Lower leg skin (tissue), 4 donors: ENCODE measurements at regions of chr1 and their contacts with region 1.

Region 1: DNA sequence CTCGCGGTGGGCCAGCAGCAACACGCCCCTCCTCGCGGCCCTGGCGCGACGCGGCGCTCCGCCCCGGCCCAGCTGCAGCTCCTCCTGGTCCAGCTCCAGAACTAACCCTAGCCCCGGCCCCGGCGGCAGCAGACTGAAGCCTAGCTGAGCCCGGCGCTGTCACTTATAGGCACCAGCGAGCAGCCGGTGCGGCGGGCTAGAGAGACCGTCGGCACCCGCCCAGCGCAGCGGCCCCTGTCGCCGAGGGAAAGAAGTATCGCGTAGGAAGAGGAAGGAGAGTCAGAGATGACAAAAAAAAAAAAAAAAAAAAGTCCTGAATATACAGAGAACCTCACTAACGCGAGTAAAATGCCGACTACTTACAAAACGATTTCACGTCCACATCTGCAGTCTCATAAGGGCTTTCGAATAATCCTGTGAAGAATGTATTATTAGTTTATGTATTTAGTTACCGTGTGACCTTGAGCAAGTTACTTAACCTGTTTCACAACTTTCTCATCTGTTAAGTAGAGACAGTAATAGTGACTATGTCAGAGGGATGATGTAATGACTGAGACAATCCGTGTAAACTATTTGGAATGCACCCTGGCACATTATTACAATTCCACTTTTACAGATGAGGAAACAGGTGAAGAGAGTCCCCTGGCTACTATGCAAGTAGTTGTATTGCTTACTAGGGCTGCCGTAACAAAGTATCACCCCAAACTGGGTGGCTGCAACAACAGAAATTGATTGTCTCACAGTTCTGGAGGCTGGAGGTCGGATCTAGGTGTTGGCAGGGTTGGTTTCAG is at the start of gene SLC9A1:
- DNase-seq: peak; percentile 93 to 99
- H3K4me3 ChIP-seq: peak within 1 kb of the TSS; percentile 58
- CTCF ChIP-seq: no peak
- POLR2A ChIP-seq: peak in 1 of 2 donors; percentile 97
- total RNA-seq, gene SLC9A1: 10.9 to 19.4 (median 13.2) TPM

Region 2: GRCh38 chr1:27116697-27117096 is 38.5 kb before region 1 on chr1:
- intact Hi-C with region 1: loop called (anchors 5 kb)
- DNase-seq: no peak
- H3K4me3 ChIP-seq: no peak overlapping the region
- CTCF ChIP-seq: no peak
- POLR2A ChIP-seq: no peak